CD4-positive, alpha-beta T cell (primary cell): ENCODE measurements at regions of chr1 and their contacts with region 1.

Region 1: DNA sequence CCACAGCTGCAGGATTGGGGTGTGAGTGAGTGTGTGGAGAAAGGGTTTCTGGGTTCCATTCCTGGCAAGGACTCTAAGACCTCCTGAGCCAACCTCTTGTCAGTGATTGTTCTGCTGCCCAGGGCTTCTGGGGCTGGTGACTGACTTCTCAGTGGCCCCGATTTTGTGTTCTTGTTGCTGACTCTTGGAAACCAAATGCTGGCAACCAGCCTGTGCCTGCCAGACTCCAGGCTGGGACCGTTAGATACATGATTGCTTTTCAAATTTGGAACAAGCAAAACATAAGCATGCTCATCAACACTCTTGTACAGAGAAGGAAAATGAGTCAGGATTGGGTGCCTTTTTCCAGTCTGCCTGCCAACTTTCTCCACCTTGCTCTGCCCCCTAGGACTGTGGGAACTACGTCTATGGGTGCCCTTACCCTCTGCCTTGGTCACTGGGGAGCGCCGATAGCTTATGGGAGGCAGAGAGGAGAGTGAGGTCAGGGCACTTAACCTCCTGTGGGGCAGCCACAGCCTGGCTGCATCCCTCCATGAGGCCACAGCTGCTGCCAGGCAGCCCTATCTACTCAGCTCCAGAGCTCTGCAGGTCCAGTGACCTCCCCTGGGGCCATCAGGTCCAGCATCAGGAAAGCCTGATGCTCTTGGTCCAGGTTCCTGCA is 39.3 kb upstream of the EPS8L3 start:
- DNase-seq: peak in 1 of 14 experiments; percentile 33
- ATAC-seq: no peak
- H3K4me3 ChIP-seq: peak overlapping the region; percentile 17
- H3K4me3 Mint-ChIP-seq: peak overlapping the region; percentile 58
- H3K27ac ChIP-seq: peak overlapping the region; percentile 79 to 80
- H3K27ac Mint-ChIP-seq: peak overlapping the region; percentile 83
- H3K4me1 ChIP-seq: peaks cover 91% of the 10 kb centered on the region
- H3K4me1 Mint-ChIP-seq: peaks cover 85% of the 10 kb centered on the region
- H3K27me3 ChIP-seq: no peaks in the 10 kb centered on the region
- H3K27me3 Mint-ChIP-seq: no peaks in the 10 kb centered on the region
- CTCF ChIP-seq: no peak

Region 2: GRCh38 chr1:109773146-109773899 is 29.7 kb before region 1 on chr1:
- CTCF ChIA-PET with region 1: interaction called, 11 read pairs
- POLR2A ChIA-PET with region 1: interaction called, 9 read pairs
- intact Hi-C with region 1: no loop called
- DNase-seq: peak; percentile 50 to 87 (median 62)
- ATAC-seq: peak; percentile 88
- H3K4me3 ChIP-seq: no peak overlapping the region
- H3K4me3 Mint-ChIP-seq: no peak overlapping the region
- H3K27ac ChIP-seq: no peak overlapping the region
- H3K27ac Mint-ChIP-seq: no peak overlapping the region
- H3K4me1 ChIP-seq: peaks cover 21% of the 10 kb centered on the region
- H3K4me1 Mint-ChIP-seq: peaks cover 12% of the 10 kb centered on the region
- H3K27me3 ChIP-seq: no peaks in the 10 kb centered on the region
- H3K27me3 Mint-ChIP-seq: no peaks in the 10 kb centered on the region
- CTCF ChIP-seq: peak; percentile 66

Region 3: DNA sequence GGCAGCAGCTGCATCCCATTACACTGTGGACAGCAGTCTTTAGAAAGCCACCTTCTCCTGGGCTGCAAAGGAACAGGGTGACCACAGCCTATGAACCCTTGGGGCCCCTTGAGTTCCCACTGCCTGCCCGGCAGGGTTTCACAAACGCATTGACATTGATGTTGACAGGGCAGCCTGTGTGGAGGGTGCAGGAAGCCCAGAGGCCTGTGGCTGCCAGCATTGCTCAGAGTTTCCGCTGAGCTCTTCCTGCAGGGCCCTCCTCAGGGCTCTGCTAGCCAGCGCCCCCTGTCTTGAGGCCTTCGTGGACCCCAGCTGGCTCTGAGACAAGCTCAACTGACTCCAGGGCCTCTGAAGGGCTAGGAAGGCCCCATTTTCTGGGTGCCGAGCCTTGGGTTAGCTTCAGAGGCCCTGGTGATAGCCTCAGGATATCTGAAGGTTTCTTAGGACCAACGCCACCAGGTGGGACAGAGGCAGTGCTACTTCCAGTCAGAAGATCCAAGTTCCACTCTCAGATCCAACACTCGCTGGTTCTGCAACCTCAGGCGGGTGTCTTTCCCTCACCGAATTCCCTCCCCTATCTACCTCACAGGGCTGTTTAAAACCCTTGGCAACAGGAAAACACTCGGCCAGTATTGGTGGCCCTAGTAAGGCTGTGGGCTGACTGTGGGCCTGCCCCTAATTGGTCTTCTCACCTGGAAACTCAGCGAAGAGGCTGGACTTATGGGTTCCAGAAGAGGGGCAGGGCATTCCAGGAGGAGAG is 12.1 kb before region 1 on chr1:
- CTCF ChIA-PET with region 1: interaction called, 31 read pairs
- POLR2A ChIA-PET with region 1: interaction called, 52 read pairs
- intact Hi-C with region 1: no loop called
- DNase-seq: peak; percentile 51 to 90 (median 70)
- ATAC-seq: peak; percentile 95
- H3K4me3 ChIP-seq: no peak overlapping the region
- H3K4me3 Mint-ChIP-seq: peak overlapping the region; percentile 48
- H3K27ac ChIP-seq: peak overlapping the region; percentile 32 to 69
- H3K27ac Mint-ChIP-seq: peak overlapping the region; percentile 66
- H3K4me1 ChIP-seq: peaks cover 81% of the 10 kb centered on the region
- H3K4me1 Mint-ChIP-seq: peaks cover 60% of the 10 kb centered on the region
- H3K27me3 ChIP-seq: no peaks in the 10 kb centered on the region
- H3K27me3 Mint-ChIP-seq: no peaks in the 10 kb centered on the region
- CTCF ChIP-seq: peak; percentile 76

Region 4: GRCh38 chr1:109910123-109910962 is 107.3 kb after region 1 on chr1 and contains the start of gene CSF1:
- CTCF ChIA-PET with region 1: no interaction called
- POLR2A ChIA-PET with region 1: interaction called, 3 read pairs
- intact Hi-C with region 1: loop called in 1 of 2 experiments (anchors 5 kb)
- DNase-seq: peak; percentile 20 to 84 (median 42)
- ATAC-seq: peak; percentile 43
- H3K4me3 ChIP-seq: peak within 1 kb of the TSS; percentile 79
- H3K4me3 Mint-ChIP-seq: peak within 1 kb of the TSS; percentile 91
- H3K27ac ChIP-seq: peak within 1 kb of the TSS in 1 of 2 donors; percentile 35
- H3K27ac Mint-ChIP-seq: peak within 1 kb of the TSS; percentile 77
- H3K4me1 ChIP-seq: peaks cover 81% of the 10 kb centered on the region
- H3K4me1 Mint-ChIP-seq: peaks cover 68% of the 10 kb centered on the region
- H3K27me3 ChIP-seq: no peaks in the 10 kb centered on the region
- H3K27me3 Mint-ChIP-seq: peaks cover 10% of the 10 kb centered on the region
- CTCF ChIP-seq: no peak
- total RNA-seq, gene CSF1: 6.5 to 6.7 TPM

Region 5: DNA sequence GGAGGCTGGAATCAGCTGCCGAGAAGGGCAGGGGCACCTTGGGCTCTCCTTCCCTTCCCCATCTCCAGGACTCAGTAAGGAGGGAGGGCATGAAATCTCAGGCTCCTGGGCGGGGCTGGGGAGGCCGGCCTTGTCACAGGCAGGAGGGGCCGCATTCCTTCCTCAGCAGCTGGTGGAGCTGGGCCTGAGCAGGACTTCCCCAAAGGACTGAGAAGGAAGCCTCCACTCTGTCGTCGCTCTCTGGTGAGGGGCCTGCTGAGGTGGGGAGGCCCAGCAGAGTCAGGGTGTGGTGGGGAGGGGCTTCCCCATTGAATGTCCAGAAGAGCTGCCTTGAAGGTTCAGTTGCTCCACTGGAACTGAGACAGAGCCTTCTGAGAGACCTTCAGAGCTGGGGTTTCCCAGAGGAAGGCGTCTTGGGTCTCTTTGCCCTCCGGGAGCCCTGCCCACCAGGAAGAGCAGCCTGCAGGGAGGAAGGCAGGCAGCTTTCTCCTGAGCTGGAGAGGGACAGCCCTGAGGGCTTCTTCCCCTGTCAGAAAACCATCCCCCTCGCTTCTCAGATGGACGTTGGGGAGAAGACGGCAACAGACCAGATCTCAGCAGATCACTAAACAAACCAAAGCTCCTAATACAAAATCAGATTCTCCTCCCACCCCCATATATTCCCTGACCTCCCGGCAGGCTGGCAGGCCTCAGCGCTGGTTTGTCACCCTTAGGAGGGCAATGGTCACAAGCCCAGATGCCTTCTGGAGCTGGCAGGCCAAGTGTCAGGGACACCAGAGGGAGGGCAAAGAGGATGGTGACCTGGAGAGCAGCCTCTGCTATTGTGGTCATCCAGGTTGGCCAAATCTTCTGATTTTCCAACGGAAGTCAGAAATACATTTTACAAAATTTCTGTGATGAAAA is 705.3 kb after region 1 on chr1:
- CTCF ChIA-PET with region 1: no interaction called
- POLR2A ChIA-PET with region 1: no interaction called
- intact Hi-C with region 1: no loop called
- DNase-seq: peak in 2 of 14 experiments; percentile 29 to 38
- ATAC-seq: no peak
- H3K4me3 ChIP-seq: no peak overlapping the region
- H3K4me3 Mint-ChIP-seq: no peak overlapping the region
- H3K27ac ChIP-seq: no peak overlapping the region
- H3K27ac Mint-ChIP-seq: no peak overlapping the region
- H3K4me1 ChIP-seq: no peaks in the 10 kb centered on the region
- H3K4me1 Mint-ChIP-seq: no peaks in the 10 kb centered on the region
- H3K27me3 ChIP-seq: no peaks in the 10 kb centered on the region
- H3K27me3 Mint-ChIP-seq: peaks cover 2% of the 10 kb centered on the region
- CTCF ChIP-seq: no peak